CD8-positive, alpha-beta T cell (primary cell): ENCODE measurements at regions of chr2 and their contacts with region 1.

Region 1: GRCh38 chr2:241081643-241082340 is 20.3 kb downstream of the MTERF4 start:
- DNase-seq: peak in 1 of 9 experiments; percentile 49
- ATAC-seq: no peak
- H3K4me3 ChIP-seq: no peak overlapping the region
- H3K4me3 Mint-ChIP-seq: no peak overlapping the region
- H3K27ac ChIP-seq: no peak overlapping the region
- H3K27ac Mint-ChIP-seq: peak overlapping the region; percentile 52
- H3K4me1 ChIP-seq: peaks cover 3% of the 10 kb centered on the region
- H3K4me1 Mint-ChIP-seq: peaks cover 25% of the 10 kb centered on the region
- H3K27me3 ChIP-seq: no peaks in the 10 kb centered on the region
- H3K27me3 Mint-ChIP-seq: no peaks in the 10 kb centered on the region
- CTCF ChIP-seq: no peak

Region 2: GRCh38 chr2:240775905-240776304 is 305.9 kb before region 1 on chr2:
- CTCF ChIA-PET with region 1: no interaction called
- POLR2A ChIA-PET with region 1: no interaction called
- intact Hi-C with region 1: no loop called
- DNase-seq: no peak
- ATAC-seq: no peak
- H3K4me3 ChIP-seq: no peak overlapping the region
- H3K4me3 Mint-ChIP-seq: no peak overlapping the region
- H3K27ac ChIP-seq: no peak overlapping the region
- H3K27ac Mint-ChIP-seq: no peak overlapping the region
- H3K4me1 ChIP-seq: no peaks in the 10 kb centered on the region
- H3K4me1 Mint-ChIP-seq: no peaks in the 10 kb centered on the region
- H3K27me3 ChIP-seq: no peaks in the 10 kb centered on the region
- H3K27me3 Mint-ChIP-seq: no peaks in the 10 kb centered on the region
- CTCF ChIP-seq: no peak

Region 3: DNA sequence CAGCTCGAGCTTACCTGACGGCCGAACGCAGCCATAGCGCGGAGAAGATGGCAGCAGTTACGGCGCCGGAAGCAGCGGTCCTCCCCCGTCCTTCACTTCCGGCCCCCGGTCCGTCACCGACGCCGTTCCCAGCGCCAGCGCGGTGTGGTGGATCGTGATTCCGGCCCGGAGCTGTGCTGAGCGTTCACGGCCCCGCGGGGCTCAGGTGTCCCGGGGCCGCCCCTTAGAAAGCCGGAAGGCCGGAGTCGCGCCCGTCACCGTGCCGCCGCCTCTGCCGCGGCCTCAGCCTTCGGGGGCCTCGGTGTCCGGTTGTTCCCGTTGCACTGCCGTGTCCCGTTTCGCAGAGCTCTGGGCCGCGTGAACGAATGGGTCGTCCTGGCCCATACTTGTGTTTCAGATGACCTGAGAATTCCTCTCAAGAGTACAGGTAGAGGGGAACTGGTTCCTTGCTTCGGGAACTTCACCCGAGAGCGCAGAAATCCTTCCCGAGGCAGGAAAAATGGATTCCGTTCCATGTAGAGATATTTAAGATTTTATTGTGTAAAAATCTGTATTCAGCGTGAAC is 20.5 kb after region 1 on chr2 and contains the start of gene MTERF4:
- CTCF ChIA-PET with region 1: interaction called, 5 read pairs
- POLR2A ChIA-PET with region 1: no interaction called
- intact Hi-C with region 1: loop called in 1 of 2 experiments (anchors 2 kb)
- DNase-seq: peak; percentile 74 to 95 (median 88)
- ATAC-seq: peak; percentile 85
- H3K4me3 ChIP-seq: peak within 1 kb of the TSS; percentile 74 to 83
- H3K4me3 Mint-ChIP-seq: peak within 1 kb of the TSS; percentile 95
- H3K27ac ChIP-seq: peak within 1 kb of the TSS; percentile 86 to 94
- H3K27ac Mint-ChIP-seq: peak within 1 kb of the TSS; percentile 98
- H3K4me1 ChIP-seq: peaks cover 71% of the 10 kb centered on the region
- H3K4me1 Mint-ChIP-seq: peaks cover 84% of the 10 kb centered on the region
- H3K27me3 ChIP-seq: no peaks in the 10 kb centered on the region
- H3K27me3 Mint-ChIP-seq: no peaks in the 10 kb centered on the region
- CTCF ChIP-seq: no peak
- total RNA-seq, gene MTERF4: 100.0 to 102 TPM

Region 4: DNA sequence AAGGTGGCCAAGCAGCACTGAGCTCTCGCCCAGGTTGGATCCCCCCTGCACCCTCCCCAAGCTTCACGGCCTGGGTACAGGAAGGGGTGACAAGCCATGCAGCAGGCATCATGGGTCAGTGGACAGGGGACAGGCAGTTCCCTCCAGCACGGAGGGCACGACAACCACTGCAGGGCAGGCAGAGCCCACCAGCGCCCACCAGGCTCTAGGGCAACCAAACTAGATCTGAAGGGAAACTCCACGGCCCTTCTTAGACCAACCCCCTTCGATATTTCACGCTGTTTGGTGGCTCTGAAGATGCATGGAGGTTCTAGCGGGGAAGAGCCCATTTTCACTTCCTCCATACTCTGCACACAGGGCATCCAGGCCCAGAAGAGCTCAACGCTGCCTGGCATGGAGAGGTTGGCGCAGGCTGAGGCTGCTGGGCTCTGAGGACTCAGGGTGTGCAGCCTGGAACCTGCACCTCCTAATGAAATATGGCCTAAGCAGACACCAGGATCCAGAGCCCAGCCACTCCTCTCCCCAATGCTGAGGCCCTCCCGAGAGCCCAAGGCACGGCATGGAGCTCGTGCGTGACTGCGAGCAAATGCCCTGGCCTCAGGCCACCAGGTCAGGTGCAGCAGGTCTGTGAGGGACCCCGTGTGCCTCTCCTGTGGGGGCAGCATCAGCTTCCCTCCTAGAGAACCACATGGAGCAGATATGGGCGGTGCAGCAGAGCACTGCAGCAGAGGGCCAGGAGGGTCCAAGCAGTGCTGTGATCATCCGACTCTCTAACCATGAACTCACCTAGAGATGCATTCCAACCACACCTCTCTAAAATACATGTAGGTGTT is 29.0 kb after region 1 on chr2:
- CTCF ChIA-PET with region 1: interaction called, 11 read pairs
- POLR2A ChIA-PET with region 1: interaction called, 18 read pairs
- intact Hi-C with region 1: no loop called
- DNase-seq: peak in 4 of 9 experiments; percentile 41 to 73 (median 56)
- ATAC-seq: peak; percentile 33
- H3K4me3 ChIP-seq: peak overlapping the region; percentile 58 to 67
- H3K4me3 Mint-ChIP-seq: peak overlapping the region; percentile 97
- H3K27ac ChIP-seq: peak overlapping the region; percentile 63 to 94
- H3K27ac Mint-ChIP-seq: peak overlapping the region; percentile 98
- H3K4me1 ChIP-seq: peaks cover 61% of the 10 kb centered on the region
- H3K4me1 Mint-ChIP-seq: peaks cover 65% of the 10 kb centered on the region
- H3K27me3 ChIP-seq: no peaks in the 10 kb centered on the region
- H3K27me3 Mint-ChIP-seq: no peaks in the 10 kb centered on the region
- CTCF ChIP-seq: no peak

Region 5: GRCh38 chr2:241300000-241300399 is 218.2 kb after region 1 on chr2:
- CTCF ChIA-PET with region 1: no interaction called
- POLR2A ChIA-PET with region 1: no interaction called
- intact Hi-C with region 1: loop called (anchors 1 to 5 kb)
- DNase-seq: peak in 8 of 9 experiments; percentile 22 to 83 (median 68)
- ATAC-seq: peak; percentile 94
- H3K4me3 ChIP-seq: no peak overlapping the region
- H3K4me3 Mint-ChIP-seq: peak overlapping the region; percentile 56
- H3K27ac ChIP-seq: no peak overlapping the region
- H3K27ac Mint-ChIP-seq: peak overlapping the region; percentile 77
- H3K4me1 ChIP-seq: peaks cover 23% of the 10 kb centered on the region
- H3K4me1 Mint-ChIP-seq: peaks cover 66% of the 10 kb centered on the region
- H3K27me3 ChIP-seq: no peaks in the 10 kb centered on the region
- H3K27me3 Mint-ChIP-seq: no peaks in the 10 kb centered on the region
- CTCF ChIP-seq: peak; percentile 37